ENCODE measurements at regions of chr1 and their contacts with region 1.

Region 1: DNA sequence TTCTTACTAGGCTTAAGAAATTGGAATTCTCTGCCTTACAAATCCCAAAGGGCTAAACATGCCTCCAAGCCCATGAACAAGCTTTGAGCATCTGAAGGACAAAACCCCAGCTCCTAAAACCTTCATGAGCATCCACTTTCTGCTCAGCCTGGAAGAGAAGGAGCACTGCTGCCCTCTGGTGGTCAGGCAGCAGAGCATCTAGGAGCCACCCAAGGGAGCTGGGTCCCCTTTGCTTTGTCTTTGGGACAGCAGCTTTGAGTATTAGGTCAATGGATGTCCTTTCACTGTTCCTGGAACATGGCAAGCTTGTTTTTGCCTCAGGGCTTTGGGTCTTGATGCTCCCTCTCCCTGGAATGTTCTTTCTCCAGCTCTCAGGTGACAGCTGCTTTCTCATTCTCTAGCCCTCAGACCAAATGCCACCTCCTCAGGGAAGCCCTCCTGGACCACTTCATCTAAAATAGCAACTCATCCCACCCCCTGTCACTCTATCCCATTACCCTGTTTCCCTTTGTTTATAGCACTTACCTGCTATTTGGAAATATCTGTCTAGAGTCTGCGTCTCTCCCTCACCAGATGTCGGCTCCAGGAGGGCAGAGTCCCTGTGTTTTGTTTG is 25.7 kb downstream of the RAB7B start:
- DNase-seq: peak; percentile 68
- H3K4me3 ChIP-seq: no peak overlapping the region
- H3K27ac ChIP-seq: no peak overlapping the region
- H3K4me1 ChIP-seq: peaks cover 5% of the 10 kb centered on the region
- H3K27me3 ChIP-seq: no peaks in the 10 kb centered on the region
- CTCF ChIP-seq: peak; percentile 91 to 98
- POLR2A ChIP-seq: no peak

Region 2: DNA sequence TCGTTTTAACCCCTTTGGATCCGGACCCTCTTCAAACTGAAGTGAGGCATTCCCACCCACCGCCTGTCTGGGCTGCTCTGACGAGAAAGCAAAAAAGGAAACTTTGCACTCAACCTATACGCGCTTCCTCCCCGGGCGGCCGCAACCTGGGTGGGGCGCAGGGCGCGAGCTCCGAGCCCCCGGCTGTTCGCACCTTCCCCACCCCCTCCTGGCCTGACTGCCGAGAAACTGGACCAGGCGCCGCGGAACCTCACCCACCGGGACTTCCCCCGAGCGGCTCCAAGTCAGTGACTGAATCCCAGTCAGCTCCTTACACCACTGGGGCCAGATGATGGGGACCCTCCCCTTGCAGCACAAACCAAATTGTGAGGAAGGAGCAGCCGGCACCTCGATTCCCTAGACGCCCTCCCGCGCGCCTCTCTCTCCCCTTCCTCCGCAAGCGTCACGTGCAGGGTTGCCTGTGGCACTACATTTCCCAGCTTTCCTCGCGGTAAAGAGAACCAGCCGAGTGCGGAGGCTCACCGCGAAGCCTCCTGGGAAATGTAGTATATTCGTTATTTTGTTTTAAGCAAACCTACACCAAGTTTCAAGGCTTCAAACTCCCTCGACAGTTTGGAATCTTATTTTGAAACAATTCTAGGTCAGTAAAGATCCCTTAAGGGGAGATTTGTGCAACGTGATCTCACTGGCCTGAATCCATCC is 202.3 kb before region 1 on chr1 and contains the start of gene RAB29:
- CTCF ChIA-PET with region 1: interaction called, 30 read pairs
- POLR2A ChIA-PET with region 1: no interaction called
- dilution Hi-C with region 1: no loop called
- intact Hi-C with region 1: no loop called
- DNase-seq: peak; percentile 89
- H3K4me3 ChIP-seq: peak within 1 kb of the TSS; percentile 55 to 88 (median 59)
- H3K27ac ChIP-seq: peak within 1 kb of the TSS; percentile 1
- H3K4me1 ChIP-seq: peaks cover 8% of the 10 kb centered on the region
- H3K27me3 ChIP-seq: no peaks in the 10 kb centered on the region
- CTCF ChIP-seq: no peak
- POLR2A ChIP-seq: peak; percentile 49
- total RNA-seq, gene RAB29: 18.8 and 23.0 TPM in 2 replicates

Region 3: DNA sequence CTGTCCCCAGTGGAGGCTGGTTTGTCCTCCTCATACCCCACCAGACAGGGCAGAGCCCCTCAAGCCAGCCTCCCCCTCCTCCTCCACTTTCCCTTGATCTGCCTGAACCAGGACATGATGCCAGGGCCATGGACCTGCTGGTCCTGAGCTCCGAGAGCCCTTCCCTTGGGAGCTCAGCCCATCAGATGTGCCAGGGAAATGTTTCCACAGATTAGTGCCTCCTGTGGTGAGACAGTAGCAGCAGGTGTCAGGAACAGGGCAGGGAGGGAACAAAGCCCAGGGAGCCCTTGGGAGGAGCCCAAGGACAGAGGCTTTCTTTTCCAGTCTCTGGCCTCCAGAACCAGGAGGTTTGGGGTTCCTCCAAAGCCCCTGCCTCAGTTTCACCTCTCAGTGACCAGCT is 149.9 kb before region 1 on chr1:
- CTCF ChIA-PET with region 1: interaction called, 10 read pairs
- POLR2A ChIA-PET with region 1: no interaction called
- dilution Hi-C with region 1: no loop called
- intact Hi-C with region 1: no loop called
- DNase-seq: no peak
- H3K4me3 ChIP-seq: no peak overlapping the region
- H3K27ac ChIP-seq: no peak overlapping the region
- H3K4me1 ChIP-seq: no peaks in the 10 kb centered on the region
- H3K27me3 ChIP-seq: peaks cover 5 to 14% of the 10 kb centered on the region in 2 experiments
- CTCF ChIP-seq: no peak
- POLR2A ChIP-seq: no peak

Region 4: DNA sequence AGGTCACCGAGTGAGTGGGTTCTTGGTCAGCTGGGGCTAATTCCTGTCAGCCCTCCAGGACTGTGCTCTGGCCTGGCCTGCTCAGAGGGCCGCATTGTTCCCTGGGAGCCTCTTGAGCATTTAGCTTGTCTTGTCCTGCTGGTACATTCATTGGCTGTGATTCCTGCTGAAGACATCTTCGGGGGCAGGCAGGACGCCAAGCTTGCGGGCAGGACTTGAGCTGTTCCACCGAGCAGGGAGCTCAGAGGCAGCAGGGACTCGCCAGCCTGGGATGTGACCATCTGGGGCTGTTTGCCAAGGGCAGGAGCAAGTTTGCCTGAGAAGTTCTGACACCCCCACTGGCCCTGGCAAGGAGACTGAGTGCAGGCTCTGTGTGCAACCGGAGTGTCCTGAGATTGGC is 27.2 kb before region 1 on chr1:
- CTCF ChIA-PET with region 1: interaction called, 154 read pairs
- POLR2A ChIA-PET with region 1: no interaction called
- dilution Hi-C with region 1: no loop called
- intact Hi-C with region 1: no loop called
- DNase-seq: no peak
- H3K4me3 ChIP-seq: no peak overlapping the region
- H3K27ac ChIP-seq: no peak overlapping the region
- H3K4me1 ChIP-seq: peaks cover 11% of the 10 kb centered on the region
- H3K27me3 ChIP-seq: peaks cover 14 to 19% of the 10 kb centered on the region in 2 experiments
- CTCF ChIP-seq: no peak
- POLR2A ChIP-seq: no peak

Region 5: DNA sequence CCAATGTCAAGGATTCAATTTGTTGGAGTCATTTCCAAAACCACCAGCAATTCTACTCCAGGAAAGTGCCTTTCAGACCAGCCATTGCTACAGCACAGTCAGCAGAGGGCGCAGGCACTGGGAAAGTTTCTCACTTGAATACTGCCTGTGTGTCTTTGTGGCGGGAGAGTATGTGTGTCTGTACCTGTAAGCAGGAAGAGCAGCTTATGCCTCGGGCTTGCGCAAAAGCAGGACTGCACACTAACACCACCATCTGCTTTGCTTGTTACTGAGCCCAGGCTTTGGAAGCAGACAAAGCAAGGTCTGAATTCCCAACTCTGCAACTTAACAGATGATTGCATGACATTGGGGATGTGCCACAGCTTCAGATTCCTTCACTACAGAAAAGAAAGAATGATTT is 53.2 kb after region 1 on chr1:
- CTCF ChIA-PET with region 1: interaction called, 70 read pairs
- POLR2A ChIA-PET with region 1: no interaction called
- dilution Hi-C with region 1: no loop called
- intact Hi-C with region 1: no loop called
- DNase-seq: peak; percentile 75
- H3K4me3 ChIP-seq: no peak overlapping the region
- H3K27ac ChIP-seq: no peak overlapping the region
- H3K4me1 ChIP-seq: peaks cover 32% of the 10 kb centered on the region
- H3K27me3 ChIP-seq: no peaks in the 10 kb centered on the region
- CTCF ChIP-seq: peak; percentile 86
- POLR2A ChIP-seq: no peak